Right cardiac atrium (tissue), 5 donors: ENCODE measurements at regions of chr10 and their contacts with region 1.

Region 1: DNA sequence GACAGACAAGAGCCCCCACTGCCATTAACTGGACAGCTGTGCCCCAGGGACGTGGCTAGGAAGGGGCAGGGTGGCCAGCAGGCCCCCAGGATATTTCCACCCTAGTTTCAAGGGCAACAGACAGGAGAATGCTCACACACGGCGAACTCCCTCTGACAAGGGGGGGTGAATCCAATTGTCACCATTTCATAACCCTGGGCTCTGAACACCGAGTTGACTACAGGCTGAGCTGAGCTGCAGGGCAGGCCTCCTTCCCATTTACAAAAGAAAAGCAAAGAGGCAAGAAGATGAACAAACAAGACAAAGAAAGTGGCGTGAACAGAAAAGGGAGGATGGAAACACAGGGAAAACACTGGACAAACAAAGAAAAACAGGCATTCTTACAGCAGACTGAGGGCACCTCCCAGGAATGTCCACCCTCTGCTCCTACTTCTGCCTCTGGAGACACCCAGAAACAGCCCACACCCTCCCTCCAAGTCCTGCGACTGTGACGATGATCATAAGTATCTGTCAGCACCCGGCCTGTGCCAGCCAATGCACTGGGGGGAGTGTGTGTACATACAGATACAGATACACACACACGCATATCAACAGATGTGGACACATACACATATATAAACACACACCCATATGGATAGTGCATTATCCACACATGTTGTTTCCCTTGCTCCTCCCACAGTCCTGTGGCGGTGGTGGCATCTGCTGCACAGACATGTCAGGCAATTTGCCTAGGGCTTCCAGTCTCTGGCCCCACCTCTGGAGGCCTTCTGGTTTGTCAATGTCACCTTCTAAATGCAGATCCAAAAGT is 66.2 kb downstream of the FAM53B start:
- DNase-seq: peak; percentile 68 to 83 (median 83)
- ATAC-seq: peak; percentile 79 to 84
- H3K4me3 ChIP-seq: no peak overlapping the region
- H3K27ac ChIP-seq: peak overlapping the region; percentile 95
- H3K4me1 ChIP-seq: peaks cover 54% of the 10 kb centered on the region
- H3K27me3 ChIP-seq: no peaks in the 10 kb centered on the region

Region 2: GRCh38 chr10:124493214-124493882 is 184.6 kb before region 1 on chr10:
- intact Hi-C with region 1: no loop called
- DNase-seq: no peak
- ATAC-seq: no peak
- H3K4me3 ChIP-seq: no peak overlapping the region
- H3K27ac ChIP-seq: no peak overlapping the region
- H3K4me1 ChIP-seq: no peaks in the 10 kb centered on the region
- H3K27me3 ChIP-seq: no peaks in the 10 kb centered on the region

Region 3: DNA sequence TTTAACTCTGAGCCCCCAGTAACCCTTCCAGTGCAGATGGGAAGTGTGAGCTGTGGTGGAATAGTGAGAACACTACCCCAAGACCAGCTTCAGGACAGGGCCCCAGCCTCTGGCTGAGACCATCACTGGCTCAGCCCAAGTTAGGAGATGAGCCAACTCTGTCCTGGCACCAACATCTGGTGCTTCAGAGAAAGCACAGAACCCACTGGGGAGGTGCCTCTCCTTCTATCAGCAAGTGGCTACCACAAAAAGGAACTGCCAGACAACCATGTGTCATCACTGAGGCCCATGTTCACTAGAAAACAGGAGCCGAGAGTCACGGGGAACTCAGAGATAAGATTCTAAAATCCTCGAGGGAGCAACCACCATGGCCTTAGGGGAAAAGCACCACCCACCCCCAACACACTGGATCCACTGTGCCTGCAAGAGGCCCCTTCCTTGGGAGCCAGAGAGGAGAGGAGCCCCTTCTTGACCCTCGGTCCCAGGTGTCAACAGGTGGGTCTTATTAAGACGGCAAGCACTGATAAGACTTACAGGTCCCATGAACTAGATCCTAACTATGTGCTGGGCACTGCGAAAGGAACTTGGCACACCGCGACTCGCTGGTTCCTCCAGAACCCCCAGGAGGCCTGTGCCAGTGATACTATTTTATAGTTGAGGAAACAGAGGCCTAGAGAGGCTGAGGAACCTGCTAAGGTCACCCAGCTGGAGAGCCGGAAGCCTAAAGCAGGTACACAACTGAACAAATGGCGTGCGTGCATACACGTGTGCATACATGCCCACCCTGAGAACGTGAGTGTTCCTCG is 36.5 kb before region 1 on chr10:
- intact Hi-C with region 1: loop called in 1 of 4 experiments (anchors 5 kb)
- DNase-seq: peak; percentile 55 to 80 (median 77)
- ATAC-seq: peak; percentile 67 to 68
- H3K4me3 ChIP-seq: no peak overlapping the region
- H3K27ac ChIP-seq: peak overlapping the region; percentile 79
- H3K4me1 ChIP-seq: peaks cover 48% of the 10 kb centered on the region
- H3K27me3 ChIP-seq: no peaks in the 10 kb centered on the region